Aorta (tissue), 5 donors: ENCODE measurements at regions of chr1 and their contacts with region 1.

Region 1: GRCh38 chr1:238484121-238484520 is 593.4 kb upstream of the ZP4 start:
- DNase-seq: no peak
- ATAC-seq: no peak
- H3K4me3 ChIP-seq: no peak overlapping the region
- H3K27ac ChIP-seq: no peak overlapping the region
- H3K4me1 ChIP-seq: no peaks in the 10 kb centered on the region
- H3K27me3 ChIP-seq: no peaks in the 10 kb centered on the region

Region 2: DNA sequence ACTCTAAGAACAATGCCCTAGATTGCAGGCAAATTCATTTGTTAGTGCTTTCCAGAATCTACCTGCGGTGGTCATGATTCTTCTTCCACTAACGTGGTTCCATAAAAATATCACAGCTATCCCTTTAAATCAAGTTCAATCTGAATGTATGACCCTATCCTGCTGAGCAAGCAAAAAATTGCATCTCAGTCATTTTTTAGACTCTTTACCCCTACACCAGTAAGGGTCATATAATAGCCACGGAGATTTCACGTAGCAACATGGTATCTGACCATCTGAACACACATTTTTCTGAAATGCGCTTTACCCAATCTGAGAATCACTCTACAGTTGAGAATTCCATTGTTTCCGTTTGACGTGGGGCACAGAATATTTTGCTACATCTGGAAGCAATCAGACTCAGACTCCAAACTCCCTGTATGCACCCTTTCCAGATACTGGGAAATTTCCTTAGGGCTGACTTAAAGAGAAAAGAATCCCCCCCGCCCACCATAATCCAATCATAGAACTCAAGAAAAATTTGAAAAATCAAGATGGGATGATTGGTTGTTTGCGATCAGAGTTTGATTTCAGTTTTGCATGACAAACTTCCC is 105.8 kb after region 1 on chr1:
- intact Hi-C with region 1: loop called in 1 of 2 experiments (anchors 5 kb)
- DNase-seq: no peak
- ATAC-seq: no peak
- H3K4me3 ChIP-seq: no peak overlapping the region
- H3K27ac ChIP-seq: no peak overlapping the region
- H3K4me1 ChIP-seq: no peaks in the 10 kb centered on the region
- H3K27me3 ChIP-seq: no peaks in the 10 kb centered on the region

Region 3: DNA sequence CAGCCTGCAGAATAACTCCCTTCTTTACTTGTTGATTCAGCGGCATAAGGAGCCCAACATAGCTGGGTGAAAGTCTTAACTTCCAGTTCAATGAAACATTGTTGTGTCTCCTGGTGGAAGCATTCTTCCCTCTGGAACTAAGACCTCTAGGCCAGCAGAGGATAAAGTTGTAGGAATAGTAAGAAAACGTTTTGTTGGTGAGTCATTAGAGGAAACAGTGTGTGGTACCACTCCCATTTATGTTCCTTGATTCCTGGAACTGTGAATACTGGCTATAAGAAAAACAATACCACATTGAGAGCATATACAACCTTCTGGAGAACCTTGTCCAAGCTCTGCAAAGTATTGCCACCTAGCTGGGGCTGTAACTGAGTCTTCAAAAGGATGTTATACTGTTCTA is 144.0 kb after region 1 on chr1:
- intact Hi-C with region 1: no loop called
- DNase-seq: no peak
- ATAC-seq: no peak
- H3K4me3 ChIP-seq: no peak overlapping the region
- H3K27ac ChIP-seq: no peak overlapping the region
- H3K4me1 ChIP-seq: no peaks in the 10 kb centered on the region
- H3K27me3 ChIP-seq: no peaks in the 10 kb centered on the region